PC-9 (cell line): ENCODE measurements at regions of chr7 and their contacts with region 1.

Region 1: DNA sequence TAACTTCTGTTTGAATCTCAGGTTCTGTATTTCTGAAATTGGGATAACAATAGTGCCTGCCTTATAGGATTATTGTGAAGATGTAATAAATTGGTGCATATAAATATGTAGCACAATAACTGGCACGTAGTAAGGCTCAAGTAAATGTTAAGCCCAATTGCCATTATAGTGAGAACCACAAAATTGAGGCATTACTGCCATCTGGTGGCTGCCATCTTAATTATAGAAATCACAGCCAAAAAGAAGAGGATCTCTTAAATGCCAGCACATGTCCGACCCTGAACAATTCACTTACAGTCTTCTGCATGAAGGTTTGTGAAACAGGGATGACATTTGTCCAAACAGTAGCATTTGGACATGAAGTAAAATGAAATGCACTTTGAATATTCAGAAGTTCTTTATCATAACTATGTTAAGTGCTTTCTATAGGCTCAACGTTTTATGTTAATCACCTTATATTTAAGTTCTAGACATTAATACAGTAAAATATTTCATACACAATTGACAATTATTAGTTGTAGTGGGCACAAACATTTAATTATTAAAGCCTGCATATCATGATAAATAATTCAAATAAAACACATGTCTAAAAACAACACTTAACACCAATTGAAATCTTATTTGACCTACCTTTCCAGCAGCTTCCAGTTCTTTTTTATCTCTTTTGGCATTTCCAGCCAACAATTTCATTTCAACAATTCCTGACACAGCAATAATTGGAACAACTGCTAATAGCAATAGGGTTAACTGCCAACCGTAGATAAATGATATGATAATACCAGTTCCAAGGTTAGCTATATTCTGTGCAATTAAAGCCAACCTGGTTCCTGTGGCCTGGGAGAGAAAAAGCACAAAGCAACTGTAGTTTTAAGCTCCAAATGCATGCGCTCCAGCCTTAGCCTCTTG is 58.5 kb downstream of the ABCB4 start:
- DNase-seq: peak in 1 of 2 experiments; percentile 55
- H3K4me3 ChIP-seq: no peak overlapping the region
- H3K27ac ChIP-seq: no peak overlapping the region
- H3K4me1 ChIP-seq: no peaks in the 10 kb centered on the region
- H3K27me3 ChIP-seq: no peaks in the 10 kb centered on the region
- CTCF ChIP-seq: peak; percentile 84

Region 2: DNA sequence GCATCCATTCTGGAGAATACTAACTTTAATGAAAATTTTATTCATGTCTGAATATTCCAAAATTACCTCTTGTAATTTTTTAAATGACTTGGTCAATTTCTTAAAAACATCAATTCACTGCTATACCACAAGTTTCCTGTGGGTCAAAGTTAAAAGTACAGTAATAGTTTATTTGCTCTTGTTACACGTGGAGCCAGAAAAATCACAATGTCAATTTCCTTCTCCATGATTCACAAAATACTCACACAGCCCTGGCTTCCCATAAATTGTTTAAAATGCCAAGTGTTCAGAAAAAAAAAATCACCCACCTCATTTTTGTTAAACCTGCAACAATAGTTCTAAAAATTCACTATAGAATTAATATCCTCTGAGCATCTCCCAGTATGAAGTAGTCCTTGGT is 912.7 kb before region 1 on chr7:
- CTCF ChIA-PET with region 1: no interaction called
- POLR2A ChIA-PET with region 1: no interaction called
- intact Hi-C with region 1: no loop called
- DNase-seq: no peak
- H3K4me3 ChIP-seq: no peak overlapping the region
- H3K27ac ChIP-seq: no peak overlapping the region
- H3K4me1 ChIP-seq: no peaks in the 10 kb centered on the region
- H3K27me3 ChIP-seq: no peaks in the 10 kb centered on the region
- CTCF ChIP-seq: no peak

Region 3: GRCh38 chr7:86926732-86927131 is 490.2 kb before region 1 on chr7:
- CTCF ChIA-PET with region 1: no interaction called
- POLR2A ChIA-PET with region 1: no interaction called
- intact Hi-C with region 1: loop called (anchors 5 kb)
- DNase-seq: peak in 1 of 2 experiments; percentile 28
- H3K4me3 ChIP-seq: no peak overlapping the region
- H3K27ac ChIP-seq: no peak overlapping the region
- H3K4me1 ChIP-seq: no peaks in the 10 kb centered on the region
- H3K27me3 ChIP-seq: no peaks in the 10 kb centered on the region
- CTCF ChIP-seq: peak; percentile 78

Region 4: GRCh38 chr7:87219545-87220025 is 197.3 kb before region 1 on chr7 and contains the start of gene TMEM243:
- CTCF ChIA-PET with region 1: interaction called, 3 read pairs
- POLR2A ChIA-PET with region 1: no interaction called
- intact Hi-C with region 1: loop called (anchors 10 kb)
- DNase-seq: peak; percentile 57 to 64
- H3K4me3 ChIP-seq: peak within 1 kb of the TSS; percentile 94
- H3K27ac ChIP-seq: peak within 1 kb of the TSS; percentile 36
- H3K4me1 ChIP-seq: peaks cover 20% of the 10 kb centered on the region
- H3K27me3 ChIP-seq: no peaks in the 10 kb centered on the region
- CTCF ChIP-seq: no peak
- total RNA-seq, gene TMEM243: 24.6 and 26.5 TPM in 2 replicates

Region 5: DNA sequence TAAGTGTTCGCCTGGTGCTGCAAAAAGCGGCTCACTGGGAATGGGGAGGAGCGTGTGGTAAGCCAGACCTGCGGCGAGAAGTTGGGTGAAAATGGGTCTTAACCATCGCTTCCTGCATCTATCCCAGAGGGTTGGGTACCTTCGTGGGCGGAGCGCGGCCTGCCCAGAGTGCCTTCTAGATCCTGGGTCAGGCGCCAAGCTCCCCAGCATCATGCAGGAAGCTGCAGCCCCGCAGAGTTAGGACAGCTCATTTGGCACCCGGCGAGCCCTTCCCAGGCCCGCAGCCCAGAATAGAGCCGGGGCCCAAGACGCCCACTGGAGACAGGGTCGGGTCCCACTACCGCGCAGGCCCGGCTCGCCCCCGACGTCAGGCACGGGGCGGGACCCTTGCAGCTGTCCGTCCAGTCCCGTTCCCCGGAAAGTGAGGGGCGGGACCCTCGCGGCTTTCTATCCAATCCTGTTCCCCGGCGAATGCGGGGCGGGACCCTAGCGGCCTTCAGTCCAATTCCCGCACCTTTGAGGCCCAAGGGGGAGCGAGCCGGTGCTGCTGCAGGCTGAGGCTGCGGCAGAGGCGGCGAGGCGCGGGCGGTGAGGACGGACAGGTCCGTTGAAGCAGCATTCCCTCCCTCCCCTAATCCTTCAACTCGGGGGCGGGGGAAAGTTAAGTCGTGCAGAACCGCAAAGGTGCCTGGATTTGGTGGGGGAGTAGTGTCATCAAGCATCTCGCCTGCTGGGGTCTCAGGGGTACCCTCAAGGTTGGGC is 71.6 kb before region 1 on chr7 and contains the start of gene CROT:
- CTCF ChIA-PET with region 1: no interaction called
- POLR2A ChIA-PET with region 1: no interaction called
- intact Hi-C with region 1: loop called (anchors 2 kb)
- DNase-seq: peak; percentile 82 to 96
- H3K4me3 ChIP-seq: peak within 1 kb of the TSS; percentile 93
- H3K27ac ChIP-seq: no peak within 1 kb of the TSS
- H3K4me1 ChIP-seq: peaks cover 17% of the 10 kb centered on the region
- H3K27me3 ChIP-seq: no peaks in the 10 kb centered on the region
- CTCF ChIP-seq: no peak
- total RNA-seq, gene CROT: 13.4 and 15.2 TPM in 2 replicates

Region 6: DNA sequence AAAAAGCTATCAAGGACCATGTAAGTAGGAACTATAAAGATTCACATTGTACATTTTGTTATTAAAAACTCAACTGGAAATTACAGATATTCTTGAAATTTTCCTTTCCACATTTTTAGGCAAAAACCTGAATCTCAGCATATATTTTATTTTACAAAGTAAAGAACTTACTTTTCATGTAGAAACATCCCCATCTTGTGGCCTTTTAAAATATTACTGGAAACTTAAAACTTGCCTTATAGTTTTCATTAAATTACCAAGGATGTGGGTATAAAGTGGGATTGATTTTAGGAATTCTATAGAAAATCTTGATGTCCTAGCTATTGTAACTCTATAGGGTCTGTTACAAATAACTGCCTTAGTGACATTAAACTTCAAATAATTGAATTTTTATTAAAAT is 469.9 kb after region 1 on chr7:
- CTCF ChIA-PET with region 1: no interaction called
- POLR2A ChIA-PET with region 1: no interaction called
- intact Hi-C with region 1: loop called (anchors 5 kb)
- DNase-seq: peak in 1 of 2 experiments; percentile 37
- H3K4me3 ChIP-seq: no peak overlapping the region
- H3K27ac ChIP-seq: no peak overlapping the region
- H3K4me1 ChIP-seq: no peaks in the 10 kb centered on the region
- H3K27me3 ChIP-seq: no peaks in the 10 kb centered on the region
- CTCF ChIP-seq: peak; percentile 71

Region 7: DNA sequence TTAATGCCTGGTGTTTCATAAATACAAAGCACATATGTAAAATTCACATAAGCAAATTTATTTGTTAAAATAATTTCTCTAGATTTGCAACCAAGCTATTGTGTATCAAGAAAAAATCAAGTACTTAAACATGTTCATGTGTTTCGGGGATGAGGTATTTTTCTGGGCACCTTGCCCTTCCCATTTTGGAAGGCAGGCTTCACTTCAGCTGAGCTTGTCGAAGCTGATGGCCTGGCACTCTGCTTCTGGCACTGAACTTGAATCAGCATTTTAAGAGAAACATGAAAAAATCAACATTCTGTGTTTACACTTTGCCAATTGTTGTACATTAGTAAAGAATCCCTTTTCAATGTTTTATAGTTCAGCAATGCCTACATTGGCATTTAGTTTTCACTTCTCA is 1068.9 kb after region 1 on chr7:
- CTCF ChIA-PET with region 1: no interaction called
- POLR2A ChIA-PET with region 1: no interaction called
- intact Hi-C with region 1: no loop called
- DNase-seq: no peak
- H3K4me3 ChIP-seq: no peak overlapping the region
- H3K27ac ChIP-seq: no peak overlapping the region
- H3K4me1 ChIP-seq: no peaks in the 10 kb centered on the region
- H3K27me3 ChIP-seq: no peaks in the 10 kb centered on the region
- CTCF ChIP-seq: no peak